ENCODE measurements at regions of chr1 and their contacts with region 1.

Region 1: DNA sequence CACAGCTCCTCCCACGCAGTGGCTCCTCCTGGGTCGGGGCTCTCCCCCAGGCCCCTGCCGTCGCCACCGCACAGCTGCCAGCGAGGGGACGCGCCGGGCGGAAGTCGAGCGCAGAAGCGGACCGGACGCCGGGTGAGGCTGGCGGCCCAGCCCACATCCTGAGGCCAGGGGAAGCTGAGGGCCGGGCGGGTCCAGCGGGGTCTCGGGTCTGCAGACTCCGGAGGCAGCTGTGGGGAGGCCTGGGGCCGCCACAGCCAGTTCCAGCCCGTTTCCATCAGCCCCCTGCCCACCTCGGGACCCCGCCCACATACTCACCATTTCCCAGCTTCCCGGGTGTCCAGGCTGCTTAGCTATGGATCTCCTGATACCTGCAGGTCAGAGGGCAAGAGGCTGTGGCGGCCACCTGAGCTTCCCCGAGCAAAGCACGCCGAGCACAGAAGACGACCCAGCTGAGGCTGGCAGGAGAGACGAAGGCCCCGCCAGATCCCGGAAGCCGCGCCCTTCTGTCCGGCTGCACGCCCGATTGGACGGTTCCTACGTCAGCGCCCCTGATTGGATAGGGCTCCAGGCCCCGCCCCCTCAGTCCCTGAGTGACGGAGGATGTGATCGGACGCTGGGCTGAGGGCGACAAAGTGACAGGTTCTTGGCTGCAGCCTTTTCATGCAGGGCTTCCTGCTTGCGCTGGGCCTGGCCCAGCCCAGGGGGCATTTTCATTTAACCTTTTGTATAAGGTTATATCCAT is 38.7 kb upstream of the ZNF124 start:
- DNase-seq: peak; percentile 98
- ATAC-seq: peak; percentile 99
- H3K4me3 Mint-ChIP-seq: peak overlapping the region; percentile 94
- H3K27ac Mint-ChIP-seq: peak overlapping the region; percentile 95
- H3K4me1 Mint-ChIP-seq: peaks cover 59% of the 10 kb centered on the region
- H3K27me3 Mint-ChIP-seq: no peaks in the 10 kb centered on the region

Region 2: DNA sequence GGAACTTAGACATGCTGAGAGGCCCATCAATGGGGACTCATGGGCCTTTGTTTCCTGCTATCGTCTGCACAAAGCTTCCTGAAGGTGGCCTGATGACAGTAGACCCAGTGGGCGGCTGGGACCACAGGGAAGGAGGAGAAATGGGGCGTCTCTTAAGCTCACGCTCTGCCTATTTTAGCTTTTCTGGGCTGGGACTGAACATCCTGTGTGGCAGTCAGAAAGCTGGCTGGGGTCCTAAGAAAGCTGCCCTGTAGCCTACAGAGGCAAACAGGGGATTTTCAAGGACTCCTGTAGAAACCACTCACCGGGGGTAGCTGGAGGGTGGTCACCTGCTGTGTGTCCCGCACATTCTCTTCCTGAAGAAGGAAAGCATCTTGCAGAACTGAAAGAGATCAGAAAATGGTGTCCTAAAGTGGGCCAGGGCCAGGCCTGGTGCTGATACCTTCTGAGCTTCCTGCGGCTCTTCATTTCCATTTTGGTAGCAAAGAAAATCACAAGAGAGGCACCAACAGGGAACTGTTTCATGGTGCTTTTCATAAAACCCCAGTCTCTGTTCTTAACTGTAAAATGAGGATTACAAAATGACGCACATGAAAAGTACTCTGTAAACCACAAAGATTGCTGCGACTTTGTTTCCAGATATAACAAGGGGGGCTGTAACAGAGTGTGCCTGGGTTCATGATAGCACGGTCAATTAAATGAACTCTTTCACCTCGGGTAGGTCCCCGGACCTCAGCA is 112.5 kb after region 1 on chr1:
- CTCF ChIA-PET with region 1: no interaction called
- POLR2A ChIA-PET with region 1: interaction called, 11 read pairs
- DNase-seq: peak; percentile 68
- ATAC-seq: peak; percentile 87
- H3K4me3 Mint-ChIP-seq: peak overlapping the region; percentile 68
- H3K27ac Mint-ChIP-seq: peak overlapping the region; percentile 94
- H3K4me1 Mint-ChIP-seq: peaks cover 61% of the 10 kb centered on the region
- H3K27me3 Mint-ChIP-seq: no peaks in the 10 kb centered on the region